CD4-positive, alpha-beta T cell (primary cell): ENCODE measurements at regions of chr1 and their contacts with region 1.

Region 1: GRCh38 chr1:106492880-106493279 is 563.6 kb upstream of the PRMT6 start:
- DNase-seq: no peak
- ATAC-seq: no peak
- H3K4me3 ChIP-seq: no peak overlapping the region
- H3K4me3 Mint-ChIP-seq: no peak overlapping the region
- H3K27ac ChIP-seq: no peak overlapping the region
- H3K27ac Mint-ChIP-seq: no peak overlapping the region
- H3K4me1 ChIP-seq: no peaks in the 10 kb centered on the region
- H3K4me1 Mint-ChIP-seq: no peaks in the 10 kb centered on the region
- H3K27me3 ChIP-seq: no peaks in the 10 kb centered on the region
- H3K27me3 Mint-ChIP-seq: no peaks in the 10 kb centered on the region
- CTCF ChIP-seq: no peak

Region 2: DNA sequence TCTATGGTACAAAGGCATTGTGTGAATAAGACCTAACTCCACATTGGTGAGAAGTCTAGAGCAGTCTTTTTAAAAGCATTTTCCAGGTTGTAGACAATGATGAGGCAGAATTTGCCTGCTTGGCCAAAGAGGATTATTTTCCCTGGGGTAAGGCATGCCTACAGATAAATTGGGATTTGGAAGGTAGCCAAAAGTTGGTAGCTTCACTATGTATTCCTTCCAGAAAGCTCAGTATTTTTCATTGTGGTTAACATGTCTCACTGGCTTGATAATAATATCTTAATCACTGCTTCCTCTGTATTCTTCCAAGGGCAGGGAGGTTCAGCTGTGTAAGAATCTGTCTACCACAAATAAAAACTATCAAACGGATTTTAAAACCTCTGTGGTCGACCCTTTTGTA is 27.2 kb before region 1 on chr1:
- CTCF ChIA-PET with region 1: no interaction called
- POLR2A ChIA-PET with region 1: no interaction called
- intact Hi-C with region 1: no loop called
- DNase-seq: no peak
- ATAC-seq: no peak
- H3K4me3 ChIP-seq: no peak overlapping the region
- H3K4me3 Mint-ChIP-seq: no peak overlapping the region
- H3K27ac ChIP-seq: no peak overlapping the region
- H3K27ac Mint-ChIP-seq: no peak overlapping the region
- H3K4me1 ChIP-seq: no peaks in the 10 kb centered on the region
- H3K4me1 Mint-ChIP-seq: no peaks in the 10 kb centered on the region
- H3K27me3 ChIP-seq: no peaks in the 10 kb centered on the region
- H3K27me3 Mint-ChIP-seq: no peaks in the 10 kb centered on the region
- CTCF ChIP-seq: no peak

Region 3: GRCh38 chr1:106504675-106505074 is 11.8 kb after region 1 on chr1:
- CTCF ChIA-PET with region 1: no interaction called
- POLR2A ChIA-PET with region 1: no interaction called
- intact Hi-C with region 1: loop called in 1 of 2 experiments (anchors 1 kb)
- DNase-seq: no peak
- ATAC-seq: no peak
- H3K4me3 ChIP-seq: no peak overlapping the region
- H3K4me3 Mint-ChIP-seq: no peak overlapping the region
- H3K27ac ChIP-seq: no peak overlapping the region
- H3K27ac Mint-ChIP-seq: no peak overlapping the region
- H3K4me1 ChIP-seq: no peaks in the 10 kb centered on the region
- H3K4me1 Mint-ChIP-seq: no peaks in the 10 kb centered on the region
- H3K27me3 ChIP-seq: no peaks in the 10 kb centered on the region
- H3K27me3 Mint-ChIP-seq: no peaks in the 10 kb centered on the region
- CTCF ChIP-seq: no peak